ENCODE measurements at regions of chr7 and their contacts with region 1.

Region 1: GRCh38 chr7:101333912-101334311 is 12.3 kb upstream of the IFT22 start:
- DNase-seq: no peak
- ATAC-seq: no peak
- H3K4me3 ChIP-seq: no peak overlapping the region
- H3K4me3 Mint-ChIP-seq: no peak overlapping the region
- H3K27ac ChIP-seq: no peak overlapping the region
- H3K27ac Mint-ChIP-seq: no peak overlapping the region
- H3K4me1 ChIP-seq: no peaks in the 10 kb centered on the region
- H3K4me1 Mint-ChIP-seq: no peaks in the 10 kb centered on the region
- H3K27me3 ChIP-seq: peaks cover 0 to 23% of the 10 kb centered on the region in 2 experiments
- H3K27me3 Mint-ChIP-seq: peaks cover 2 to 3% of the 10 kb centered on the region in 2 donors

Region 2: GRCh38 chr7:99576251-99576650 is 1757.7 kb before region 1 on chr7:
- CTCF ChIA-PET with region 1: no interaction called
- POLR2A ChIA-PET with region 1: interaction called in 1 of 2 experiments, 10 read pairs
- DNase-seq: no peak
- ATAC-seq: no peak
- H3K4me3 ChIP-seq: no peak overlapping the region
- H3K4me3 Mint-ChIP-seq: no peak overlapping the region
- H3K27ac ChIP-seq: no peak overlapping the region
- H3K27ac Mint-ChIP-seq: no peak overlapping the region
- H3K4me1 ChIP-seq: peaks cover 0 to 15% of the 10 kb centered on the region in 2 experiments
- H3K4me1 Mint-ChIP-seq: peaks cover 13 to 16% (median 13%) of the 10 kb centered on the region in 3 donors
- H3K27me3 ChIP-seq: no peaks in the 10 kb centered on the region
- H3K27me3 Mint-ChIP-seq: no peaks in the 10 kb centered on the region

Region 3: GRCh38 chr7:101299511-101300464 is 34.1 kb before region 1 on chr7:
- CTCF ChIA-PET with region 1: no interaction called
- POLR2A ChIA-PET with region 1: no interaction called
- DNase-seq: no peak
- ATAC-seq: peak in 2 of 4 experiments; percentile 17 to 29
- H3K4me3 ChIP-seq: no peak overlapping the region
- H3K4me3 Mint-ChIP-seq: peak overlapping the region in 1 of 3 donors; percentile 44
- H3K27ac ChIP-seq: no peak overlapping the region
- H3K27ac Mint-ChIP-seq: no peak overlapping the region
- H3K4me1 ChIP-seq: peaks cover 0 to 20% of the 10 kb centered on the region in 2 experiments
- H3K4me1 Mint-ChIP-seq: peaks cover 0 to 14% (median 11%) of the 10 kb centered on the region in 3 donors
- H3K27me3 ChIP-seq: peaks cover 14 to 83% of the 10 kb centered on the region in 2 experiments
- H3K27me3 Mint-ChIP-seq: peaks cover 52 to 73% of the 10 kb centered on the region in 2 donors

Region 4: GRCh38 chr7:101420436-101420835 is 86.5 kb after region 1 on chr7:
- CTCF ChIA-PET with region 1: no interaction called
- POLR2A ChIA-PET with region 1: no interaction called
- DNase-seq: no peak
- ATAC-seq: no peak
- H3K4me3 ChIP-seq: no peak overlapping the region
- H3K4me3 Mint-ChIP-seq: no peak overlapping the region
- H3K27ac ChIP-seq: no peak overlapping the region
- H3K27ac Mint-ChIP-seq: no peak overlapping the region
- H3K4me1 ChIP-seq: no peaks in the 10 kb centered on the region
- H3K4me1 Mint-ChIP-seq: peaks cover 0 to 10% (median 0%) of the 10 kb centered on the region in 3 donors
- H3K27me3 ChIP-seq: peaks cover 0 to 28% of the 10 kb centered on the region in 2 experiments
- H3K27me3 Mint-ChIP-seq: peaks cover 6 to 20% of the 10 kb centered on the region in 2 donors

Region 5: GRCh38 chr7:101527844-101528667 is 194.1 kb after region 1 on chr7:
- CTCF ChIA-PET with region 1: no interaction called
- POLR2A ChIA-PET with region 1: interaction called in 1 of 2 experiments, 11 read pairs
- DNase-seq: no peak
- ATAC-seq: no peak
- H3K4me3 ChIP-seq: no peak overlapping the region
- H3K4me3 Mint-ChIP-seq: no peak overlapping the region
- H3K27ac ChIP-seq: no peak overlapping the region
- H3K27ac Mint-ChIP-seq: no peak overlapping the region
- H3K4me1 ChIP-seq: no peaks in the 10 kb centered on the region
- H3K4me1 Mint-ChIP-seq: no peaks in the 10 kb centered on the region
- H3K27me3 ChIP-seq: peaks cover 0 to 40% of the 10 kb centered on the region in 2 experiments
- H3K27me3 Mint-ChIP-seq: peaks cover 6 to 14% of the 10 kb centered on the region in 2 donors

Measured in T-cell (primary cell).